ENCODE measurements at regions of chr2 and their contacts with region 1.

Region 1: GRCh38 chr2:10408649-10409579 is 39.2 kb downstream of the ODC1 start:
- DNase-seq: peak; percentile 75
- H3K4me3 ChIP-seq: no peak overlapping the region
- H3K27ac ChIP-seq: peak overlapping the region; percentile 74
- H3K4me1 ChIP-seq: peaks cover 52% of the 10 kb centered on the region
- H3K27me3 ChIP-seq: no peaks in the 10 kb centered on the region
- CTCF ChIP-seq: peak; percentile 94 to 96
- POLR2A ChIP-seq: no peak

Region 2: GRCh38 chr2:9897331-9897737 is 511.6 kb before region 1 on chr2:
- CTCF ChIA-PET with region 1: no interaction called
- POLR2A ChIA-PET with region 1: no interaction called
- dilution Hi-C with region 1: no loop called
- intact Hi-C with region 1: no loop called
- DNase-seq: peak; percentile 84
- H3K4me3 ChIP-seq: no peak overlapping the region
- H3K27ac ChIP-seq: no peak overlapping the region
- H3K4me1 ChIP-seq: peaks cover 7% of the 10 kb centered on the region
- H3K27me3 ChIP-seq: no peaks in the 10 kb centered on the region
- CTCF ChIP-seq: no peak
- POLR2A ChIP-seq: no peak

Region 3: DNA sequence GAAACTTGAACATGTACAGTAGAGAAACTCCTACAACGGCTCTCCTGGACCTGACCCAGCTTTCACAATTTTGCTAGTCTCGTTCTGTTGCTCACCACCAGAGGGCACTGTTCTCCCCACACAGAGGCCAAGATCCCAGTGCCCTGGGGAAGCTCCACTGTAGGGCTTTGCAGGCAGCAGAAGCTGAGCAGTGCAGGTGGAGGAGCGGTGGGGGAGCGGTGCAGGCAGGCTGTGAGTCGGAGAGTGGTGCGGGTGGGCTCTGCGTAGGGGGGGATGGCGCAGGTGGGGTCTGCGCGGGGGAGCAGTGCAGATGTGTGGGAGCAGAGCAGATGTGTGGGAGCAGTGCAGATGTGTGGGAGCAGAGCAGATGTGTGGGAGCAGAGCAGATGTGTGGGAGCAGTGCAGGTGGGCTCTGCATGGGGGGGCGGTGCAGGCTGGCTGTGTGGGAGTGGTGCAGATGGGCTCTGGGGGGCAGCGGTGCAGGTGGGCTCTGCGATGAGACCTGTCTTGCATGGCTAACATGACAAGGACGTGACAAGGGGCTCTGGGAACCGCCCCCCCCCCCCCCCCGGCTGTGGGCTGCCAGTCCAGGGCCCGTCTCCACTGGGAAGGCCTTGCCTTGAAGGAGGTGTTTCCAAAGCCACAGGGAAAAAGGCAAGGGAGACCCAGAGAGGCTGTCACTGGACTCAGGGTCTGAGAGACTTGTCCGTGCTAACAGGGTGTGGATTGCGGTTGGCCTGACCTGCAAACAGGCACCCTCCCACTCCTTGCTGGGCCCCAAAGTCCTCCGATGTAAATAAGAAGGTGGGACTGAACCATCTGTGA is 336.0 kb before region 1 on chr2:
- CTCF ChIA-PET with region 1: interaction called, 68 read pairs
- POLR2A ChIA-PET with region 1: no interaction called
- dilution Hi-C with region 1: no loop called
- intact Hi-C with region 1: no loop called
- DNase-seq: peak; percentile 76
- H3K4me3 ChIP-seq: no peak overlapping the region
- H3K27ac ChIP-seq: no peak overlapping the region
- H3K4me1 ChIP-seq: no peaks in the 10 kb centered on the region
- H3K27me3 ChIP-seq: peaks cover 11 to 14% of the 10 kb centered on the region in 2 experiments
- CTCF ChIP-seq: peak; percentile 87 to 90
- POLR2A ChIP-seq: no peak

Region 4: GRCh38 chr2:10162586-10163497 is 246.1 kb before region 1 on chr2:
- CTCF ChIA-PET with region 1: interaction called, 69 read pairs
- POLR2A ChIA-PET with region 1: interaction called, 7 read pairs
- dilution Hi-C with region 1: no loop called
- intact Hi-C with region 1: loop called (anchors 1 kb)
- DNase-seq: peak; percentile 26
- H3K4me3 ChIP-seq: no peak overlapping the region
- H3K27ac ChIP-seq: peak overlapping the region; percentile 97
- H3K4me1 ChIP-seq: peaks cover 57% of the 10 kb centered on the region
- H3K27me3 ChIP-seq: no peaks in the 10 kb centered on the region
- CTCF ChIP-seq: peak in 1 of 2 donors; percentile 18
- POLR2A ChIP-seq: no peak

Region 5: GRCh38 chr2:10285556-10286198 is 123.2 kb before region 1 on chr2:
- CTCF ChIA-PET with region 1: interaction called, 19 read pairs
- POLR2A ChIA-PET with region 1: interaction called, 3 read pairs
- dilution Hi-C with region 1: no loop called
- intact Hi-C with region 1: no loop called
- DNase-seq: peak; percentile 79
- H3K4me3 ChIP-seq: no peak overlapping the region
- H3K27ac ChIP-seq: peak overlapping the region; percentile 22
- H3K4me1 ChIP-seq: peaks cover 31% of the 10 kb centered on the region
- H3K27me3 ChIP-seq: no peaks in the 10 kb centered on the region
- CTCF ChIP-seq: peak in 1 of 2 donors; percentile 2
- POLR2A ChIP-seq: no peak

Region 6: GRCh38 chr2:10346929-10347561 is 61.9 kb before region 1 on chr2:
- CTCF ChIA-PET with region 1: interaction called, 11 read pairs
- POLR2A ChIA-PET with region 1: no interaction called
- dilution Hi-C with region 1: no loop called
- intact Hi-C with region 1: loop called (anchors 1 kb)
- DNase-seq: peak; percentile 23
- H3K4me3 ChIP-seq: no peak overlapping the region
- H3K27ac ChIP-seq: peak overlapping the region; percentile 46
- H3K4me1 ChIP-seq: peaks cover 31% of the 10 kb centered on the region
- H3K27me3 ChIP-seq: no peaks in the 10 kb centered on the region
- CTCF ChIP-seq: peak in 1 of 2 donors; percentile 15
- POLR2A ChIP-seq: no peak

Region 7: GRCh38 chr2:10392951-10393644 is 15.8 kb before region 1 on chr2:
- CTCF ChIA-PET with region 1: interaction called, 17 read pairs
- POLR2A ChIA-PET with region 1: no interaction called
- dilution Hi-C with region 1: no loop called
- intact Hi-C with region 1: no loop called
- DNase-seq: no peak
- H3K4me3 ChIP-seq: no peak overlapping the region
- H3K27ac ChIP-seq: no peak overlapping the region
- H3K4me1 ChIP-seq: peaks cover 31% of the 10 kb centered on the region
- H3K27me3 ChIP-seq: no peaks in the 10 kb centered on the region
- CTCF ChIP-seq: no peak
- POLR2A ChIP-seq: no peak

Region 8: DNA sequence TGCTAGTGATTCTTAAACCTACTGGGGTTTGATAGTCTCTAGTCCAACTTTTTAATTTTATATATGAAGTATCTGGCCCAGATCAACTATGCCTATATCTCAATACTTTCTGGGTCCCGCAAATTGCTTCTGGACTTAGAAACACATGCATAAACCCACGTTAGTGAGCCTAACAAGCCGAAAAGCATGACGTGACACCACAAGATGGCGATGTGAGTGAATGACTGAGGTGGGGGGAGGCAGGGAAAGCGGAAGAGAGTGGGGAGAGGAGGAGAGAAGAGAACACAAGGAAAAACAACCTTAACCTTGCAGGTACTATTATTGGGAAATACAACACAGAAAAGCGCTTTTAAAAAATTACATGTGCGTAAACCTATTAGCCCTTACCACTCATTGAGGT is 389.9 kb after region 1 on chr2:
- CTCF ChIA-PET with region 1: no interaction called
- POLR2A ChIA-PET with region 1: no interaction called
- dilution Hi-C with region 1: no loop called
- intact Hi-C with region 1: no loop called
- DNase-seq: no peak
- H3K4me3 ChIP-seq: no peak overlapping the region
- H3K27ac ChIP-seq: no peak overlapping the region
- H3K4me1 ChIP-seq: no peaks in the 10 kb centered on the region
- H3K27me3 ChIP-seq: no peaks in the 10 kb centered on the region
- CTCF ChIP-seq: no peak
- POLR2A ChIP-seq: no peak